ENCODE measurements at regions of chr16 and their contacts with region 1.

Region 1: DNA sequence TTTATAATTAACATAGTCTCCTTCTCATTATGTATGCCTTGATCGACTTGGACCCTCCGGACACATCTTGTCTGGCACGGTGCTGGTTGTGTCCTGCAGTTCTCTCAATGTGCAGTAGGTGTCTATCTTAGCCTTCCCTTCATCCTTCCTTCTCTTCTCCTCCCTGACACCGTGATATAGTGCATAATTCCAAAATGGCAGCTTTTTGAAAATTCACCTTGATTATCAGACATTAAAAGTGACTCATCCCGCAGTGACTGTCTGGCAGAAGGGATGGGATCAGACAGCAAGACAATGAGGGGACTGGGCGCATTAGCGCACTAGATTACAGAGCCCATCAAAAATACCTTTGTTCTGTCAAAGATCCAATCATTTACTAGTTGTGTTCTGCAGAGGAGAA is 70.0 kb upstream of the PMFBP1 start:
- DNase-seq: peak; percentile 16 to 59 (median 28)
- H3K4me3 ChIP-seq: no peak overlapping the region
- H3K27ac ChIP-seq: no peak overlapping the region
- H3K4me1 ChIP-seq: peaks cover 5% of the 10 kb centered on the region
- H3K27me3 ChIP-seq: no peaks in the 10 kb centered on the region
- CTCF ChIP-seq: peak; percentile 63 to 70 (median 64)
- EP300 ChIP-seq: no peak
- POLR2A ChIP-seq: no peak

Region 2: DNA sequence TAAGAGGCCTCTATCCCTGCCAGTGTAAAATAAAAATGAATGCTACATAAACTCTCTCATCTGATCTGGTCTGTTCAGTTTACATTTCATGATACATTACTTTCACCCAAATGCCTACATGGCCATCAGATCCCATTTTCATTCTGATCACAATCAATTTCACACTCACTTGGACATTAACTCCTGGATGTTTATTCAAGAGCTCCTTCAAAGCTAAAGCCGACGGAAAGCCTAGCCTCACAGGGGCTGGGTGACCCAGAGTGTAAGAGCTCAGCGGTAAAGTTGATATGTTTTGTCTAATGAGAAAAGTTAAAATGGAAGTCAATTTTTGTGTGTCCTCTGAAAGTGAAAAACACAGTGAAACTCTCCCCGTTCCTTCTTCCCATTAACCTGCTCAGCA is 262.3 kb before region 1 on chr16:
- intact Hi-C with region 1: no loop called
- DNase-seq: no peak
- H3K4me3 ChIP-seq: no peak overlapping the region
- H3K27ac ChIP-seq: no peak overlapping the region
- H3K4me1 ChIP-seq: no peaks in the 10 kb centered on the region
- H3K27me3 ChIP-seq: no peaks in the 10 kb centered on the region
- CTCF ChIP-seq: no peak
- EP300 ChIP-seq: no peak
- POLR2A ChIP-seq: no peak

Region 3: GRCh38 chr16:72008424-72009216 is 233.3 kb before region 1 on chr16 and contains the start of gene DHODH:
- intact Hi-C with region 1: no loop called
- DNase-seq: peak; percentile 96 to 98 (median 97)
- H3K4me3 ChIP-seq: peak within 1 kb of the TSS; percentile 82
- H3K27ac ChIP-seq: peak within 1 kb of the TSS in 1 of 2 donors; percentile 11
- H3K4me1 ChIP-seq: peaks cover 6% of the 10 kb centered on the region
- H3K27me3 ChIP-seq: no peaks in the 10 kb centered on the region
- CTCF ChIP-seq: no peak
- EP300 ChIP-seq: no peak
- POLR2A ChIP-seq: peak; percentile 6
- total RNA-seq, gene DHODH: 3.2 to 13.0 (median 10.6) TPM

Region 4: GRCh38 chr16:72182976-72183375 is 59.0 kb before region 1 on chr16:
- intact Hi-C with region 1: no loop called
- DNase-seq: no peak
- H3K4me3 ChIP-seq: no peak overlapping the region
- H3K27ac ChIP-seq: no peak overlapping the region
- H3K4me1 ChIP-seq: no peaks in the 10 kb centered on the region
- H3K27me3 ChIP-seq: no peaks in the 10 kb centered on the region
- CTCF ChIP-seq: no peak
- EP300 ChIP-seq: no peak
- POLR2A ChIP-seq: no peak

Region 5: DNA sequence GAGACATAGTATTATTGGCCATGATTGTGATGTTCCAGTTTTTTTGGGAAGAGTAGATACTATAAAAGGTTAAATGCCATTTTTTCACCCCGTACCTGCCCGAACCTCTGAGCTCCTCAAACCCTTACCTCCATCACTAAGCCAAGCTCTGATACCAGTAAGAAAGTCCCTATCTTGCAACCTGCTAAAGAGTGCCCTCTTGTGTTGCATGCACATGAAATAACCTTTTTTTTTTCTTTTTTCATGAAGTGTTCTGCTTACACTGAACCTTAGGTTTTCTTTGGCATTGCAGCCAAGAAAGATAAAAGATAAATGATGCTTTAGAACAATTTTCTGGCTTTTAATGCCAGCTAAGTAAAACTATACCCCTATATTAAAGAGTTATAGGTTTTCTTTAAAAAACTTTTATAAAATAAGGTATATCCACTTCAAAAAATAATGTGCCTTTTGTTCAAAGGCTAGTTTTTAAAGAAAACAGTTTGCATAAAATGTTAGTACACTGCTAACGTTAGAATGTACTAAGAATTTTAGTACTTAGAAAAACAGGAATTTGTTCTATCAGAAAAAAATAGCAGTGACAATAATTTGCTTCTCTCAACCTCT is 225.3 kb after region 1 on chr16:
- intact Hi-C with region 1: loop called in 2 of 4 experiments (anchors 5 to 10 kb)
- DNase-seq: no peak
- H3K4me3 ChIP-seq: no peak overlapping the region
- H3K27ac ChIP-seq: no peak overlapping the region
- H3K4me1 ChIP-seq: no peaks in the 10 kb centered on the region
- H3K27me3 ChIP-seq: no peaks in the 10 kb centered on the region
- CTCF ChIP-seq: no peak
- EP300 ChIP-seq: no peak
- POLR2A ChIP-seq: no peak